ENCODE measurements at regions of chr10 and their contacts with region 1.

Region 1: DNA sequence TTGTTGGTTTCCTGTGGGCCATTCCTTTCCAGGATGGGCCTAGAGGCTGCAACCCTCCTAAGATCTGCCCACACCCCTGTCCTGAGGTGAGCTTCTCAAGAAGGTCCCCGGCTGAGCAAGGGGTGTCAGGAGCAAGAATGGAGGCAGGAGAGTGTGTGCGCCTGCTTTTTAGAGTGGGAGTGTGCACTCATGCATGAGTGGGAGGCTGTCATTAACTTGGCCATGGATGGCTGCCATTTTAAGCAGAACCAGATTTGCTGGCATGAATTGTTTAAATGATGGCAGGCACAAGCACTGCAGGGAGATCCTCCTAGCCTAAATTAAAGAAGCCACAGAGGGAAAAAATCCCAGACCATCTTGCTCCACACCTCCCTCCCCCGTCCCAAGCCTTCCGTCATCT is 2.9 kb upstream of the SGPL1 start:
- DNase-seq: no peak
- ATAC-seq: no peak
- H3K4me3 ChIP-seq: no peak overlapping the region
- H3K27ac ChIP-seq: no peak overlapping the region
- H3K4me1 ChIP-seq: peaks cover 0 to 11% (median 4%) of the 10 kb centered on the region in 4 donors
- H3K27me3 ChIP-seq: no peaks in the 10 kb centered on the region
- CTCF ChIP-seq: no peak
- POLR2A ChIP-seq: no peak

Region 2: GRCh38 chr10:70880077-70880534 is 67.3 kb after region 1 on chr10:
- intact Hi-C with region 1: loop called (anchors 5 kb)
- DNase-seq: peak; percentile 71 to 85 (median 73)
- ATAC-seq: peak; percentile 91 to 98 (median 95)
- H3K4me3 ChIP-seq: no peak overlapping the region
- H3K27ac ChIP-seq: peak overlapping the region in 1 of 3 donors; percentile 34
- H3K4me1 ChIP-seq: peaks cover 0 to 14% (median 3%) of the 10 kb centered on the region in 4 donors
- H3K27me3 ChIP-seq: no peaks in the 10 kb centered on the region
- CTCF ChIP-seq: peak; percentile 92 to 97 (median 93)
- POLR2A ChIP-seq: no peak

Measured in right lobe of liver (tissue), 6 donors.